ENCODE measurements at regions of chr3 and their contacts with region 1.

Region 1: GRCh38 chr3:69306239-69307185 is 79.4 kb downstream of the FRMD4B start:
- DNase-seq: peak; percentile 35 to 72 (median 67)
- ATAC-seq: peak; percentile 98
- H3K4me3 ChIP-seq: no peak overlapping the region
- H3K4me3 Mint-ChIP-seq: peak overlapping the region in 3 of 10 donors; percentile 4 to 61 (median 44)
- H3K27ac ChIP-seq: no peak overlapping the region
- H3K27ac Mint-ChIP-seq: peak overlapping the region in 2 of 9 donors; percentile 29 to 35
- H3K4me1 ChIP-seq: no peaks in the 10 kb centered on the region
- H3K4me1 Mint-ChIP-seq: peaks cover 0 to 22% (median 4%) of the 10 kb centered on the region in 7 donors
- H3K27me3 ChIP-seq: no peaks in the 10 kb centered on the region
- H3K27me3 Mint-ChIP-seq: no peaks in the 10 kb centered on the region

Region 2: DNA sequence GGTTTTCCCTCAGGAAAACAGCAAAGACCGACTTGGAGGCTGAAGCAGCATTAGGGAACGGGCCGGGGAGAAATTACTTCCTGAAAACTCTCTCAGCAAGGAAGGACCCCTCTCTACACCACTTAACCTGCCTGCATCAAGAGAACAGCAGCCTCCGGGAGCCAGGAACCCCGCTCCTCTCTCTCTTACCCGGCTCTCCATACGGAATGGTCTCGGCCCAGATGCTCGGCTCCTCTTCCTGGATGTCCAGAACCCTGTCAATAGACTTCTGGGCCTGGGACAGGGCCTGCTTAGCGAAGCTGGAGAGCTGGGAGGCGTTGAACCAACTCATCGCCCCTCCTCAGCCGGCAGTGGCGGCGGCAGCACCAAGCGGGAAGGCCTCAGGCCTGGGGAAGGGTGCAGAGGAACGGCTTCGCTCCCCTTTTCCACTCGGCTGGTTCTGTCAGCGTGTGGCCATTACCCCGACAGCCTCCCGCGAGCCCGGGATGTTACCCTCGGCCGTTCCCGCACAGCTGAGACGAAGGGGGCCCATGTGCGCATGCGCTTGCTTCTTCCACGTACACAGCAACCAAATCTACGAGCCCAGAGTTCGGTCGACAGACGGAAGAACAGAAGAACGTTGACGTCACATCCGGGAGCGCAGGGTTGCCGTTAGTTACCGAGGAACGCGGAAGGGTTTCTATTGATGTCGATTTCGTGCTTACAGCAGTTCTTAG is 254.6 kb before region 1 on chr3 and contains the start of gene TMF1:
- CTCF ChIA-PET with region 1: no interaction called
- POLR2A ChIA-PET with region 1: no interaction called
- intact Hi-C with region 1: loop called (anchors 1 kb)
- DNase-seq: peak; percentile 93 to 98 (median 98)
- ATAC-seq: peak; percentile 95
- H3K4me3 ChIP-seq: peak within 1 kb of the TSS; percentile 96
- H3K4me3 Mint-ChIP-seq: peak within 1 kb of the TSS; percentile 94 to 99 (median 96)
- H3K27ac ChIP-seq: peak within 1 kb of the TSS; percentile 87
- H3K27ac Mint-ChIP-seq: peak within 1 kb of the TSS; percentile 92 to 99 (median 98)
- H3K4me1 ChIP-seq: peaks cover 20 to 30% of the 10 kb centered on the region in 2 donors
- H3K4me1 Mint-ChIP-seq: peaks cover 20 to 59% (median 48%) of the 10 kb centered on the region in 7 donors
- H3K27me3 ChIP-seq: no peaks in the 10 kb centered on the region
- H3K27me3 Mint-ChIP-seq: peaks cover 0 to 2% (median 0%) of the 10 kb centered on the region in 5 donors
- total RNA-seq, gene TMF1: 41.3 to 71.8 (median 52.8) TPM

Region 3: DNA sequence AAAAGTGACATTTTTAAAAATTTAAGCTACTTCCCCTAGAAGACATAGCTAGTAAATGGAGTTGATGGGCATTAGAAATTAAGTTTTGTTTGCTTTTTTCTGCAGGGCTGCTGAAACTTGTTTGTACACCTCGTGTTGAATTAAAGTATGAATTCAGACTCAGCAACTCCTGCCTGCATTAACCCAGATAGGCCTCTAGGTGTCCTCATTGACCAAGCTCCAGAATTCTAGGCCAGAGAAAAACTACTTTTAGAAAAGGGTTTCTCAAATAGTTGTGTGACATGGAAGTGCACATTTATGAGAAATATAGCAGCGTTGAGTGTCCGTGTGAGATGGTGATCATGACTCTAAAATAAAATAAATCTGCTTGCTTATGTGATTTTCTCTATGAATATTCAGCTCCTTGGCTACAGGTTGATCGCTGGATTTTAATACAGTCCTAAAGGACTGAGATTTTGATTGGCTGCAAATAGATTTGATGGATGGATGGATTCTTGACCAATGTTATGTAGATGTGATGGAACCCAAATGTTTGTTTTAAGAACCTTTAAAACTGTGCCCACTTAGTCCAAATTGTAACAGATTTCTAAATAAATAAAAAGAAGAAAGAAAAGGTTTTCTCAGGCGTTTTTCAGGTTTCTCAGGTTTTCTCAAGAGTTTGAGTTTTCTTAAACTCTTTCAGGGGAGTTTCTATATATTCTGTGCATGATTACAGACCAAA is 144.8 kb before region 1 on chr3:
- CTCF ChIA-PET with region 1: interaction called, 130 read pairs
- POLR2A ChIA-PET with region 1: interaction called, 4 read pairs
- intact Hi-C with region 1: loop called (anchors 1 kb)
- DNase-seq: peak in 7 of 9 donors; percentile 22 to 62 (median 55)
- ATAC-seq: peak; percentile 84
- H3K4me3 ChIP-seq: no peak overlapping the region
- H3K4me3 Mint-ChIP-seq: no peak overlapping the region
- H3K27ac ChIP-seq: no peak overlapping the region
- H3K27ac Mint-ChIP-seq: no peak overlapping the region
- H3K4me1 ChIP-seq: no peaks in the 10 kb centered on the region
- H3K4me1 Mint-ChIP-seq: peaks cover 0 to 15% (median 0%) of the 10 kb centered on the region in 7 donors
- H3K27me3 ChIP-seq: no peaks in the 10 kb centered on the region
- H3K27me3 Mint-ChIP-seq: peaks cover 0 to 12% (median 0%) of the 10 kb centered on the region in 5 donors

Region 4: DNA sequence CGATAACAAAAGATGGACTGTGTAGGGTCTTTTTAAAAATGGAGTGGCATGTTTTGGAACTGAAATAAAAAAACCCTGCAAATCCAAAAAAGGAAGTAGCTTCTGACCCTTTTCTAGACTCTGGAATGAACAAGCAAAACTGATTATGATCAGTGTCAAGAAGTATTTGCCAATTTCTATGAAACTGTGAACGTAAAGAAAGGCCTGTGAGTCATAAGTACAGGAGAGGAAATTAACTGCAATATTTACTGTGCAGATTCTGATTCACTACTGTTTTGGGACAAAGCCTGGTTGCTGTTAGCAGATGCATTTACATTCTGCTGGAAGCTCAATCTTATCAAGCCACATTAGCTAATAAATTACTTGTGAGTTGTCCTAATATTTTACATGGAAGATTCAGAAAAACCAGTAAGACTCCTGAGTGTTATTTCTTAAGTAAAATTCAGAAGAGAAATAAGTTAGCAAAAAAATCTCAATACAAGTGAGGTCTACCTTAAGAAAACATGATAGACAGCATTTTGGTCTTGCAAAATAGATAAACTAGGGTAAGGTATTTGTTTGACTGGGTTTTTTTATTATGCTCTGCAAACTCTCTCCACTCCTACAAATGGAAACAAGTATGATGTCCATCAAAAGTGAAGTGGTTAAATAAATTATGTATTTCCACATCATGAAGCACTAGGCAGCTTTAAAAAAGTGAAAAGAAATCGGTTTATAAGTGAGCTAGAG is 93.9 kb before region 1 on chr3:
- CTCF ChIA-PET with region 1: interaction called, 3 read pairs
- POLR2A ChIA-PET with region 1: interaction called, 3 read pairs
- intact Hi-C with region 1: loop called in 1 of 2 experiments (anchors 5 kb)
- DNase-seq: no peak
- ATAC-seq: peak; percentile 82
- H3K4me3 ChIP-seq: no peak overlapping the region
- H3K4me3 Mint-ChIP-seq: peak overlapping the region in 1 of 10 donors; percentile 67
- H3K27ac ChIP-seq: no peak overlapping the region
- H3K27ac Mint-ChIP-seq: peak overlapping the region in 3 of 9 donors; percentile 25 to 85 (median 29)
- H3K4me1 ChIP-seq: peaks cover 0 to 6% of the 10 kb centered on the region in 2 donors
- H3K4me1 Mint-ChIP-seq: peaks cover 0 to 50% (median 0%) of the 10 kb centered on the region in 7 donors
- H3K27me3 ChIP-seq: no peaks in the 10 kb centered on the region
- H3K27me3 Mint-ChIP-seq: no peaks in the 10 kb centered on the region

Region 5: GRCh38 chr3:69324362-69325025 is 18.0 kb after region 1 on chr3:
- CTCF ChIA-PET with region 1: interaction called, 3 read pairs
- POLR2A ChIA-PET with region 1: no interaction called
- intact Hi-C with region 1: loop called in 1 of 2 experiments (anchors 1 kb)
- DNase-seq: no peak
- ATAC-seq: peak; percentile 47
- H3K4me3 ChIP-seq: no peak overlapping the region
- H3K4me3 Mint-ChIP-seq: peak overlapping the region in 1 of 10 donors; percentile 41
- H3K27ac ChIP-seq: no peak overlapping the region
- H3K27ac Mint-ChIP-seq: peak overlapping the region in 6 of 9 donors; percentile 2 to 75 (median 66)
- H3K4me1 ChIP-seq: peaks cover 0 to 17% of the 10 kb centered on the region in 2 donors
- H3K4me1 Mint-ChIP-seq: peaks cover 19 to 49% (median 45%) of the 10 kb centered on the region in 7 donors
- H3K27me3 ChIP-seq: no peaks in the 10 kb centered on the region
- H3K27me3 Mint-ChIP-seq: no peaks in the 10 kb centered on the region

Region 6: GRCh38 chr3:69425261-69425660 is 118.7 kb after region 1 on chr3:
- CTCF ChIA-PET with region 1: interaction called, 4 read pairs
- POLR2A ChIA-PET with region 1: no interaction called
- intact Hi-C with region 1: loop called in 1 of 2 experiments (anchors 5 kb)
- DNase-seq: peak in 5 of 9 donors; percentile 3 to 20 (median 10)
- ATAC-seq: no peak
- H3K4me3 ChIP-seq: no peak overlapping the region
- H3K4me3 Mint-ChIP-seq: no peak overlapping the region
- H3K27ac ChIP-seq: no peak overlapping the region
- H3K27ac Mint-ChIP-seq: no peak overlapping the region
- H3K4me1 ChIP-seq: no peaks in the 10 kb centered on the region
- H3K4me1 Mint-ChIP-seq: peaks cover 0 to 5% (median 0%) of the 10 kb centered on the region in 7 donors
- H3K27me3 ChIP-seq: no peaks in the 10 kb centered on the region
- H3K27me3 Mint-ChIP-seq: peaks cover 0 to 4% (median 0%) of the 10 kb centered on the region in 5 donors

Measured in naive thymus-derived CD4-positive, alpha-beta T cell (primary cell).